ENCODE measurements at regions of chr1 and their contacts with region 1.

Region 1: GRCh38 chr1:51616901-51617708 is at the start of gene OSBPL9:
- DNase-seq: peak; percentile 76 to 83
- H3K4me3 ChIP-seq: peak within 1 kb of the TSS; percentile 80
- H3K27ac ChIP-seq: peak within 1 kb of the TSS; percentile 53
- H3K4me1 ChIP-seq: peaks cover 58% of the 10 kb centered on the region
- H3K27me3 ChIP-seq: no peaks in the 10 kb centered on the region
- CTCF ChIP-seq: no peak
- total RNA-seq, gene OSBPL9: 149 and 188 TPM in 2 replicates

Region 2: GRCh38 chr1:50959913-50960844 is 656.9 kb before region 1 on chr1 and contains the start of gene FAF1:
- CTCF ChIA-PET with region 1: interaction called, 16 read pairs
- POLR2A ChIA-PET with region 1: no interaction called
- intact Hi-C with region 1: no loop called
- DNase-seq: peak; percentile 98 to 99
- H3K4me3 ChIP-seq: peak within 1 kb of the TSS; percentile 85
- H3K27ac ChIP-seq: peak within 1 kb of the TSS; percentile 66
- H3K4me1 ChIP-seq: peaks cover 23% of the 10 kb centered on the region
- H3K27me3 ChIP-seq: no peaks in the 10 kb centered on the region
- CTCF ChIP-seq: peak; percentile 56
- total RNA-seq, gene FAF1: 99.2 and 105 TPM in 2 replicates

Region 3: DNA sequence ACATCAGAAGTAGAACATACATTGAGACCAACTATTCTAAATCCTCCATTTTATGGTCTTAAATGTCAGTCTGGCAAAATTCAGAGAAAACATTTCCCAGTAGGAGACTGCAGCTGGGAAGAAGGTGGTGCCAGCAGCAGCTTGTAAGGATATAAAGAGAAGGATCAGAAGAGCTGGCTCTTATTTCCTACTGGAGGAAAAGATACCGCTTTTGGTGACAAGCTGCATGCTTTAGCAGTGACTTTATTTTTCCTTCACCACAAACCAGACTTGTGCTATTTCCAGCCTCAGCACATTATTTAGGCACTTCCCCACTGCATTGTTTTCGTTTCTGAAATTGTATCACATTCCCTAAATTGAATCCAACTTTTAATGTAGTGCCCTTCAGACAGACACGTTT is 352.7 kb before region 1 on chr1:
- CTCF ChIA-PET with region 1: no interaction called
- POLR2A ChIA-PET with region 1: no interaction called
- intact Hi-C with region 1: no loop called
- DNase-seq: peak; percentile 35 to 49
- H3K4me3 ChIP-seq: no peak overlapping the region
- H3K27ac ChIP-seq: no peak overlapping the region
- H3K4me1 ChIP-seq: peaks cover 44% of the 10 kb centered on the region
- H3K27me3 ChIP-seq: no peaks in the 10 kb centered on the region
- CTCF ChIP-seq: no peak

Region 4: GRCh38 chr1:51445351-51446090 is 171.6 kb before region 1 on chr1:
- CTCF ChIA-PET with region 1: no interaction called
- POLR2A ChIA-PET with region 1: interaction called, 13 read pairs
- intact Hi-C with region 1: no loop called
- DNase-seq: no peak
- H3K4me3 ChIP-seq: no peak overlapping the region
- H3K27ac ChIP-seq: no peak overlapping the region
- H3K4me1 ChIP-seq: no peaks in the 10 kb centered on the region
- H3K27me3 ChIP-seq: no peaks in the 10 kb centered on the region
- CTCF ChIP-seq: no peak

Region 5: DNA sequence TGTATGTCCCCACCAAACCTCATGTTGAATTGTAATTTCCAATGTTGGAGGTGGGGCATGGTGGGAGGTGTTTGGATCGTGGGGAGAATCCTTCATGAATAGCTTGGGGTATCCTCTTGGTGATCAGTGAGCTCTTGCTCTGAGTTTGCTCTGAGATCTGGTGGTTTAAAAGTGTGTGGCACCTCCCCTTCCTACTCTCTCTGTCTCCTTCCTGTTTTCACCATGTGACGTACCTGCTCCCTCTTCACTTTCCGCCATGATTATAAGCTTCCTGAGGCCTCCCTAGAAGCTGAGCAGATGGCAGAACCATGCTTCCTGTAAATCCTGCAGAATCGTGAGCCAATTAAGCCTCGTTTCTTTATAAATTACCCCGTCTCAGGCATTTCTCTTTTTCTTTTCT is 40.2 kb before region 1 on chr1:
- CTCF ChIA-PET with region 1: no interaction called
- POLR2A ChIA-PET with region 1: no interaction called
- intact Hi-C with region 1: no loop called
- DNase-seq: no peak
- H3K4me3 ChIP-seq: no peak overlapping the region
- H3K27ac ChIP-seq: no peak overlapping the region
- H3K4me1 ChIP-seq: peaks cover 20% of the 10 kb centered on the region
- H3K27me3 ChIP-seq: no peaks in the 10 kb centered on the region
- CTCF ChIP-seq: no peak

Region 6: DNA sequence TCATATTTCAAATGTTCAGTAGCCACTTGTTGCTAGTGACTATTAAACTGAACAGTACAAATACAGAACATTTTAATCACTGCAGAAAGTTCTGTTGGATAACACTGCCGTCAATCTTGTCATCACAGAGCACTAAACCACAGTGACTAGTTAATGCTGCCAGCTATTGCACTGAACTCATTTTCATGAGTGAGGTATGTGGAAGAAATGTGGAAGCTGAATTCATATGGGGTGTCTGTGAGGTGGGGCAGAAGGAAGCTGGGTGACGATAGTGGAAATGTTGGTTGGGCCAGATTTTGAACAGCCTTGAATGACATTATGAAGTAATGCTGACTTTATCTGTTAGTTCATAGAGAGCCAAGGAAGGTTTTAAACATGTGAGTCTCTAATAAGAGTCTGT is 49.4 kb after region 1 on chr1:
- CTCF ChIA-PET with region 1: no interaction called
- POLR2A ChIA-PET with region 1: interaction called, 10 read pairs
- intact Hi-C with region 1: loop called (anchors 2 kb)
- DNase-seq: no peak
- H3K4me3 ChIP-seq: no peak overlapping the region
- H3K27ac ChIP-seq: no peak overlapping the region
- H3K4me1 ChIP-seq: peaks cover 15% of the 10 kb centered on the region
- H3K27me3 ChIP-seq: no peaks in the 10 kb centered on the region
- CTCF ChIP-seq: no peak

Region 7: DNA sequence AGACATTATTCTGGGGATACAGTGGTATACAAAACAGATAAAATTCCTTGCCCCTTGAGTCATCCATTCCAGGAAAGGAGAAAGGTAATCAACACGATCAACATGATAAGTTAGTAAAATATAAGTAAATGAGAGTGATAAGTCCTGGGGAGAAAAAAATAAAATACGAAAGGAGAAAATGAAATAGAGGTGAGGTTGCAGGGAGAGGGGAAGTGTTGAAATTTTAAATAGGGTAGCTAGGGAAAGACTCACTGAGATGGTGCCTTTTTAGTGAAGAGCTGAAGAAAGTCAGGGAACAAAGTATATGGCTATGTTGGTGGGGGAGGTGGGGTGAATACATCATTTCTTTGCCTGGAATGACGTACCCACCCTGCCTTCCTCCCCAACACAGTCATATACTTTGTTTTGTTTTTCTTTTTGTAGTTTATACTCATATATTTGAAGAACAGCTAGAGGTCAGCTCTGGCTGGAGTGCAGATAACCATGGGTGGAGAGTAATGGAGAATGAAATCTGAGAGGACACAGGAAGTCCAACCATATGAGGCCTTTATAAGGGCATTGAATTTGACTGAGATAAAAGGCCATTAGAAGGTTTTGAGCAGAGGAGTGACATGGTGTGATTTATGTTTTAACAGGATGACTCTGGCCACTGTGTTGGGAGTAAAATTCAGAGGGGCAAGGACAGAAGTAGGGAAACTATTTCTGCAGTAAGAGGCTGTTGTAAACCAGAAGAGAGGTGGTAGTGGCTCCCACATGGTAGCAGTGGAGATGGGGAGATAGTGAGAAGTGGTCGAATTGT is 54.6 kb after region 1 on chr1:
- CTCF ChIA-PET with region 1: no interaction called
- POLR2A ChIA-PET with region 1: interaction called, 10 read pairs
- intact Hi-C with region 1: loop called (anchors 2 kb)
- DNase-seq: peak in 1 of 2 experiments; percentile 34
- H3K4me3 ChIP-seq: no peak overlapping the region
- H3K27ac ChIP-seq: no peak overlapping the region
- H3K4me1 ChIP-seq: peaks cover 13% of the 10 kb centered on the region
- H3K27me3 ChIP-seq: no peaks in the 10 kb centered on the region
- CTCF ChIP-seq: no peak

Region 8: DNA sequence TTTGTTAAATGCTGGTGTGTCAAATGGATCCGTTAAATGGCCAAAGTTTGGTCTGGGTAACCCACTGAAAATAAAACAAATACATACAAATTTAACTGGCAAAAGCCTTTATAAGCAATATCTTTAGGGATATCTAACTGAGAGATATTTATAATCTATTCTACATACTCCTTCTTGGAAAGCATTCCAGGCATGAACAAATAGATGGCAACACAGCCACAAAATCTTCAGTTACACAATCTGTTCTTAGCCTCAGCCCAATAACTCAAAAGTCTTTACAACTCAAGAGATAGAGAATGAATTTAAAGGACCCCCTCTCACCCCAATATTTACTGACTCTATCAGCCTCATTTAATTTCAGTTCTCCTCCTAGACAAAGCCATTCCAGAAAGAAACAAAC is 202.7 kb after region 1 on chr1:
- CTCF ChIA-PET with region 1: no interaction called
- POLR2A ChIA-PET with region 1: no interaction called
- intact Hi-C with region 1: no loop called
- DNase-seq: no peak
- H3K4me3 ChIP-seq: no peak overlapping the region
- H3K27ac ChIP-seq: no peak overlapping the region
- H3K4me1 ChIP-seq: no peaks in the 10 kb centered on the region
- H3K27me3 ChIP-seq: no peaks in the 10 kb centered on the region
- CTCF ChIP-seq: no peak

Region 9: DNA sequence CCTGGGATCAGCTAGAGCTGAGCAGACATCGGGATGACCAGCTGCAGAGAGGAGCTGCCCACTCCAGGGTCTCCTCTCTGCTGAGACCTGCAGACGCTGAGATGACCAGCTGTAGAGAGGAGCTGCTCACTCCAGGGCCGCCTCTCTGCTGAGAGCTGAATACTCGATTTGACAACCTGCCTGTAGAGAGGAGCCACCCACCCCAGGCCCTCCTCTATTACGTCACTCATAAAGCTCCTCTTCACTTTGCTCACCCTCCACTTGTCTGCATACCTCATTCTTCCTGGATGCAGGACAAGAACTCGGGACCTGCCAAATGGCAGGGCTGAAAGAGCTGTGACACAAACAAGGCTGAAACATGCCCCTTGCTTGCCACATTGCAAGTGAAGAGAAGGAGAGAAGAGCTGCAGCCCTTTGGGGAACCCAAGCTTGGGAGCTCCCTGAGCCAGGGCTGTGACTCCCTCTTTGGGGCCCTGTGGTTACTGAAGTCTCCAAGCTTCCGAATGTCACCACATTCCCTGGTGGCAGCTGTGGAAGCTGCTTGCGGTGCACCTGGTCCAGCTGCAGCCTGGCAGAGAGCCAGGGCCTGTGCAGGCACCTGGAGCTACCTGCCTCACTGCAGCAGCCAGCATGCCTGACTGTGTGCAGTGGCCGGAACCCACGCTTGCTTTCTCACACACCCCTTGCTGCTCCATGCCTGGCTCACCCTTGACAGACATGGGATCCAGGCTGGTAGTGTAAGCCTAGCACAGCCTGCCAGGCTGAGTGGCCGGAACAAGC is 689.3 kb after region 1 on chr1:
- CTCF ChIA-PET with region 1: no interaction called
- POLR2A ChIA-PET with region 1: no interaction called
- intact Hi-C with region 1: no loop called
- DNase-seq: no peak
- H3K4me3 ChIP-seq: no peak overlapping the region
- H3K27ac ChIP-seq: no peak overlapping the region
- H3K4me1 ChIP-seq: no peaks in the 10 kb centered on the region
- H3K27me3 ChIP-seq: no peaks in the 10 kb centered on the region
- CTCF ChIP-seq: no peak